Activated CD4-positive, alpha-beta memory T cell treated with anti-CD3 and anti-CD28 coated beads for 36 hours (primary cell): ENCODE measurements at regions of chr10 and their contacts with region 1.

Region 1: DNA sequence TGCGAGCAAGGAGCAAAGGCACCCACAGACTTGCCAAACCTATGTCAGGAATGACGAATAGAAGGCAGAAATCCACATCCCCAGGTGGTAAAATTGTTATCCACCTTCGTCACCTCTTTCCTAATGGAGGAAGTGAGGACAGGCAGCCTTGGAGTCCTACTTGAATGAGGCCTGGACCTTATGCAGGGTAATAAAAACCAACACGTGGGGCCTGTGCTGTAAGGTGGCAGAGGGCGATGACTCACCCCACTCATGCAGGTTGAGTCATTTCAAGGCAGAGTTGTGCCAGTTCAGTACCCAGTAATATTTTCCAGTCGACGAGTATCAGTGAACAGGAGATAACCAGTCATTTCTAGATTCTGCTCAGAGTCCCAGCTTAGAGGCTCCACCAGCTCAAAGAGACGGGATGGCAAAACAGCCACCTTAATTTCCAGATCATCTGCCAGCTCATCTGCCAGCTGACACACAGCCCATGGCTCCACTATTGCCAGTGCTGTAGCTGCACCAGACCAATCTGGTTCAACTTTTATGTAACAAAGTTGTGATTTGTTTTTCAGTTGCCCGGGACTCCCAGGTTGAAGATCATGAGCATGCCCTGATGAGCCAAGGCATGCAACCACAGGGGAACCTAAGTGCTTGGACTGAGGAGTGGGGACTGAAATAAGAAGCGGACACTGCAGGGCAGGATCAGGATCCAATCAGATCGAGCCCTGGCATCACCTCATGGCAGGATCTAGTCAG is 176.2 kb upstream of the ITGB1 start:
- DNase-seq: peak; percentile 90
- H3K4me3 Mint-ChIP-seq: peak overlapping the region; percentile 50
- H3K27ac Mint-ChIP-seq: peak overlapping the region; percentile 90
- H3K4me1 Mint-ChIP-seq: peaks cover 91% of the 10 kb centered on the region
- H3K27me3 Mint-ChIP-seq: peaks cover 1% of the 10 kb centered on the region

Region 2: DNA sequence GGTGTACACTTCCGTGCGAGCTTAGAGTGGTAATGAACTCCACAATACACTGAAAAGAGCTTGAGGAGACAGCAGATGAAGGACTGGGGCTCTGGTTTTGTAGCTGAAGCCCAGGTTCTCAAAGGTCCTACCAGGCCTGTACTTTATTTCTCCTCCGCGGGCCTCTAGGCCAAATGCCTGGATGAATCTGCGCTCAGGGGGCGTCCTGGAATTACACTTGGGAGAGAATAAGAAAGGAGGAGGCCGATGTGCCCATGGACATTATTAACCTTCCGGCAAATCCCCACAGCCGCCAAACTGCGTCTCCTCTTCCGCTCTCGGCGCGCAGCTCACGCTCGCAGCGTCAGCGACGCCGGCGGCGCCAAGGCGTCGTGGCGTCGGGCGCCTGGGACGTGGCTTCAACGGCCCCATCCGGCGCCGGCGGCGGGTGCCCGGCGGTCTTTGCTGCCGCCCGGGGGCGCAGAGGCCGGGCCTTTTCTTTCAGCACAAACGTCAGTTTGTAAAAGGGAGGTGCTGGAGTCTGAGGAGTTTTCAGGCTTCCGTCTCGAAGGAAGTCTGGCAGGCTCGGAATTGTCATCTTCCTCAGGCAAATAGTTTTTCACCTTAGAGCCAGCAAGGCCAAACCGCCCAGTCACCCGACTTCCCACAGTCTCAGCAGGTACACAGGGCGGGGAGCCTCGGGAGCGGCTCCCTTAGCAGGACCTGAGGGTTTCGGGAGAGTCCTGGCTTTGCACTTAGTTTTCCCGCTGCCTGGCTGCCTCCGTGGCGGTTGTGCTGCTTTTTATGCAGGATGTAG is 688.2 kb before region 1 on chr10 and contains the start of gene CCDC7:
- CTCF ChIA-PET with region 1: no interaction called
- POLR2A ChIA-PET with region 1: no interaction called
- intact Hi-C with region 1: loop called (anchors 10 kb)
- DNase-seq: peak; percentile 89
- H3K4me3 Mint-ChIP-seq: peak within 1 kb of the TSS; percentile 89
- H3K27ac Mint-ChIP-seq: peak within 1 kb of the TSS; percentile 96
- H3K4me1 Mint-ChIP-seq: peaks cover 13% of the 10 kb centered on the region
- H3K27me3 Mint-ChIP-seq: no peaks in the 10 kb centered on the region
- total RNA-seq, gene CCDC7: 8.6 to 11.6 TPM

Region 3: DNA sequence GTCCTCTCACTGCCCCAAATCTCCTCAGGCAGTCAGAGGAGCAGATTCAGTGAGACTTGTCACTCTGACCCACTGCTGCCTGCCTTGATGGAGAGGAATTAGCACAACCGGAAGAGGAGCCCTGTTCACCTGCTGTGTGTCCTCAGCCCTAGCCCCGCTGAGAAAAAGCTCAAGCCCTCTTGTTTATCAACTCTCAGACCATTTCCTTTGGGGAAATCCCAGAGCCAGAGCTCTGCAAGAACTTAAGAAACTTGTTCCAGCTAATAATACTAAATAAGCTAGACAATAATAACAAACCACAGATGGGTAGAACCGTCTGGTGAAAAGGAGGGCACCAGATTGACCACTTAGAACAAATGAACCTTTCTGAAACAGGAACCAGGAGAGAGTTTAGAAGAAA is 138.4 kb before region 1 on chr10:
- CTCF ChIA-PET with region 1: no interaction called
- POLR2A ChIA-PET with region 1: no interaction called
- intact Hi-C with region 1: no loop called
- DNase-seq: no peak
- H3K4me3 Mint-ChIP-seq: no peak overlapping the region
- H3K27ac Mint-ChIP-seq: no peak overlapping the region
- H3K4me1 Mint-ChIP-seq: peaks cover 4% of the 10 kb centered on the region
- H3K27me3 Mint-ChIP-seq: no peaks in the 10 kb centered on the region

Region 4: GRCh38 chr10:33073641-33074415 is 60.4 kb before region 1 on chr10:
- CTCF ChIA-PET with region 1: interaction called, 3 read pairs
- POLR2A ChIA-PET with region 1: no interaction called
- intact Hi-C with region 1: loop called (anchors 2 kb)
- DNase-seq: no peak
- H3K4me3 Mint-ChIP-seq: no peak overlapping the region
- H3K27ac Mint-ChIP-seq: no peak overlapping the region
- H3K4me1 Mint-ChIP-seq: peaks cover 2% of the 10 kb centered on the region
- H3K27me3 Mint-ChIP-seq: no peaks in the 10 kb centered on the region

Region 5: DNA sequence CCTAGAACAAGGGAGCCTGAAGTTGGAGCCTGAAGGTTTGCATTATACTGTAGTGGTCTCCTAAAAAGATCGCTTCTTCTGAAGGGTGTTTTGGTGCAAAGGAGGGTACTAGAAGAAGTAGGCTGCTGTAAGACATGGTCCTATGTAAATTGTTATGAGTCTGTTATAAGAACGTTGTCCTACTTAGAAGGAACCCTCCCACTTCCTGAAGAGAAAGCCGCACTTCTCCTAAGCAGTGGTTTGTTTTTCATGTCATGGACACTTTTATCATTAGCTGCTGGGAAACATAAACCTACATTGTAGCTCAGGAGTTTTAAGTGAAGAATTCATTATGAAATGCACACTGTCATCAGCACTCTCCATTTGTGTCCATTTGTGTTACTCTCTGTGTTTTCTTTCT is 47.0 kb before region 1 on chr10:
- CTCF ChIA-PET with region 1: no interaction called
- POLR2A ChIA-PET with region 1: no interaction called
- intact Hi-C with region 1: no loop called
- DNase-seq: no peak
- H3K4me3 Mint-ChIP-seq: no peak overlapping the region
- H3K27ac Mint-ChIP-seq: peak overlapping the region; percentile 87
- H3K4me1 Mint-ChIP-seq: peaks cover 37% of the 10 kb centered on the region
- H3K27me3 Mint-ChIP-seq: no peaks in the 10 kb centered on the region

Region 6: GRCh38 chr10:33115738-33116719 is 18.2 kb before region 1 on chr10:
- CTCF ChIA-PET with region 1: interaction called, 18 read pairs
- POLR2A ChIA-PET with region 1: interaction called, 24 read pairs
- intact Hi-C with region 1: loop called (anchors 1 kb)
- DNase-seq: peak; percentile 53
- H3K4me3 Mint-ChIP-seq: peak overlapping the region; percentile 47
- H3K27ac Mint-ChIP-seq: peak overlapping the region; percentile 81
- H3K4me1 Mint-ChIP-seq: peaks cover 92% of the 10 kb centered on the region
- H3K27me3 Mint-ChIP-seq: peaks cover 4% of the 10 kb centered on the region

Region 7: DNA sequence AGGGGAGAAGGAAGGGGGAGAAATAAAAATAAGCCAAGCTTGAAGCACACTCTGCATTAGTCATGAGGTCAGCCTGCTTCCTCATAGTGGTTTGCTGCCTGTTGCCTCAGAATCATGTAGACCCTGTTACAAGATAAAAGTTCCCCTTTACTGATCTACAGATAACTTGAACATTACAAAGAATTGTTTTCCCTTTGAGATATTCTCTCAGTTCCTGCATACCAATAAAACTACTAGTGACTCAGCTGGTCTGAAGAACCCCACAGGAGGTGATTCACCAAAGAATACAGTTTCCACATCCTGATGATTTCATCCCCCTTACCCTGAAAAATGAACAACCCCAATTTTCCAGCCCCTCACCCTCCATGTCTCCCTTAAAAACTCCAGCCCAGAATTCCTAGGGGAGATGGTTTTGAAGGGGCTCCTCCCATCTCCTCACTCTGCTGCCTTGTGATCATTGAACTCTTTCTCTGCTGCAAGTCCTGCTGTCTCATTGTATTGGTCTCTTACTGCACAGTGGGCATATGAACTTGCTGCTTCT is 231.8 kb after region 1 on chr10:
- CTCF ChIA-PET with region 1: no interaction called
- POLR2A ChIA-PET with region 1: no interaction called
- intact Hi-C with region 1: loop called (anchors 1 kb)
- DNase-seq: peak; percentile 51
- H3K4me3 Mint-ChIP-seq: no peak overlapping the region
- H3K27ac Mint-ChIP-seq: peak overlapping the region; percentile 84
- H3K4me1 Mint-ChIP-seq: peaks cover 19% of the 10 kb centered on the region
- H3K27me3 Mint-ChIP-seq: peaks cover 25% of the 10 kb centered on the region